Endothelial cell of umbilical vein (primary cell): ENCODE measurements at regions of chr9 and their contacts with region 1.

Region 1: DNA sequence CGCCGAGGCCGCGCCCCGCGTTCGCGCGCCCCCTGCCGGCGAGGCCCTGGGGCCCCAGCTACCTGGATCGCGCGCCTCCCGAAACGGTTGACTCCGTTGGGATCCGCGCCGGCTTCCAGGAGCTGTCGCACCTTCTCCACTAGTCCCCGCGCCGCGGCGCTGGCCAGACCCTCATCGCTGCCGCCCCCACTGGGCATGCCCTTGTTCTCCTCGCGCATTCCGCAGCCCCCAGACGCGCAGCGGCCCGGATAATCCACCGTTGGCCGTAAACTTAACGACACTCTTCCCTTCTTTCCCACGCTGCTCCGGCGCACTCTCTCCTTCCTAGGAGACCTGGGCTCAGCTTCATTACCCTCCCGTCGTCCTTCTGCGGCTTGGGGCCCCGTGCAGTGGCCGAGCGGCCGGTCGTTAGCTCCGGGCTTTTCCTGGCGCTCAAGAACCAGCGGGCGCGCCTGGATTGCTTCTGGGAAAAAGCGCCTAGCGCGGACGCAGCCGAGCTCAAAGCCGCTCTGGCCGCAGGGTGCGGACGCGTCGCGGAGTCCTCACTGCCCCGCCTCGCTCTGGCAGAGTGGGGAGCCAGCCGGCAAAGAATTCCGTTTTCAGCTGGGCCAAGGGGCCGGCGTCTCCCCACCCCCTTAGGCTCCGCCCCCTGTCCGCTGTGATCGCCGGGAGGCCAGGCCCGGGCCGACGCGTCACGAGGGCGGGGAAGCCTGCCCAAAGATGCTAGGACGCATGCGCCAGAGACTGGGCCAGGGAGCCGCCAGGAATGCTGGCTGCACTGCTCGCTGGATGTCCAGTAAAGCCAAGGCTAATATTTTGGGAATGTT is at the start of gene CDKN2B:
- DNase-seq: peak; percentile 95
- H3K4me3 ChIP-seq: peak within 1 kb of the TSS; percentile 60 to 95 (median 90)
- H3K27ac ChIP-seq: peak within 1 kb of the TSS; percentile 70
- H3K4me1 ChIP-seq: peaks cover 16% of the 10 kb centered on the region
- H3K27me3 ChIP-seq: peaks cover 20 to 36% of the 10 kb centered on the region in 2 experiments
- CTCF ChIP-seq: peak; percentile 89 to 95
- POLR2A ChIP-seq: peak; percentile 95
- total RNA-seq, gene CDKN2B: 2.1 and 2.3 TPM in 2 replicates

Region 2: DNA sequence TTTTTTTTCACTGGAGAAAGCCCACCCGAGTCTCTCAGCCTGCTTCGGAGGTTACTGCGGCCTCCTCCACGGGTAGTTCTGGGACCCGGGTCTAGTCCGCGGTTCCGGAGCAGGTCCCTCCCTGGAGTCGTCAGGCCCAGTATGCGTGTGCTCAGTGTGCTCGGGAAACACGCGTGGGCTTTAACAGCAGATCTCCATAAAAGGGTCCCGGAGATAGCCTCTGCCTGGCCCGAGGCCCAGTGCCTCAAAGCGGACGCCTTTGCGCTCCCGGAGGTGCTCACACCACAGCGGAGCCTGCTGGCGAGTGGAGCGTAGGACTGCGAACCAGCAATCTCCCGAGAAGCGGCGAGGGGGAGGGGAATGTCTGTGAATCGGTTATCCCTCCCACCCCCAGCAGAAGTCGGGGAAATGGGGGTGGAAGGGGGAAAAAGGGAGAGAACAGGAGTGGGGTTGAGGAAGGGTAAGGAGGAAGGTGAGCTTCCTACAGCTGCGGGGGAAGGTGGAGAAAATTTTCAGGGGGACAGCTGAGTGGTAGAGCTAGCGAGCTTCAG is 43.5 kb before region 1 on chr9:
- CTCF ChIA-PET with region 1: interaction called, 47 read pairs
- POLR2A ChIA-PET with region 1: interaction called, 4 read pairs
- dilution Hi-C with region 1: no loop called
- intact Hi-C with region 1: loop called (anchors 2 kb)
- DNase-seq: peak; percentile 68
- H3K4me3 ChIP-seq: peak overlapping the region; percentile 34 to 46 (median 40)
- H3K27ac ChIP-seq: no peak overlapping the region
- H3K4me1 ChIP-seq: peaks cover 28% of the 10 kb centered on the region
- H3K27me3 ChIP-seq: peaks cover 57 to 84% of the 10 kb centered on the region in 2 experiments
- CTCF ChIP-seq: peak; percentile 75 to 80
- POLR2A ChIP-seq: no peak

Region 3: GRCh38 chr9:22022396-22022795 is 13.4 kb after region 1 on chr9:
- CTCF ChIA-PET with region 1: interaction called, 10 read pairs
- POLR2A ChIA-PET with region 1: no interaction called
- dilution Hi-C with region 1: no loop called
- intact Hi-C with region 1: no loop called
- DNase-seq: no peak
- H3K4me3 ChIP-seq: no peak overlapping the region
- H3K27ac ChIP-seq: no peak overlapping the region
- H3K4me1 ChIP-seq: no peaks in the 10 kb centered on the region
- H3K27me3 ChIP-seq: peaks cover 0 to 2% of the 10 kb centered on the region in 2 experiments
- CTCF ChIP-seq: no peak
- POLR2A ChIP-seq: no peak

Region 4: GRCh38 chr9:22105005-22105722 is 96.2 kb after region 1 on chr9:
- CTCF ChIA-PET with region 1: interaction called, 13 read pairs
- POLR2A ChIA-PET with region 1: no interaction called
- dilution Hi-C with region 1: no loop called
- intact Hi-C with region 1: loop called (anchors 5 kb)
- DNase-seq: no peak
- H3K4me3 ChIP-seq: no peak overlapping the region
- H3K27ac ChIP-seq: no peak overlapping the region
- H3K4me1 ChIP-seq: peaks cover 20% of the 10 kb centered on the region
- H3K27me3 ChIP-seq: no peaks in the 10 kb centered on the region
- CTCF ChIP-seq: no peak
- POLR2A ChIP-seq: no peak

Region 5: GRCh38 chr9:22238809-22239684 is 230.1 kb after region 1 on chr9:
- CTCF ChIA-PET with region 1: interaction called, 61 read pairs
- POLR2A ChIA-PET with region 1: interaction called, 3 read pairs
- dilution Hi-C with region 1: no loop called
- intact Hi-C with region 1: loop called (anchors 1 kb)
- DNase-seq: peak; percentile 65
- H3K4me3 ChIP-seq: no peak overlapping the region
- H3K27ac ChIP-seq: peak overlapping the region; percentile 42
- H3K4me1 ChIP-seq: peaks cover 23% of the 10 kb centered on the region
- H3K27me3 ChIP-seq: no peaks in the 10 kb centered on the region
- CTCF ChIP-seq: peak; percentile 19 to 41
- POLR2A ChIP-seq: no peak